CD4-positive, alpha-beta memory T cell (primary cell): ENCODE measurements at regions of chr11 and their contacts with region 1.

Region 1: DNA sequence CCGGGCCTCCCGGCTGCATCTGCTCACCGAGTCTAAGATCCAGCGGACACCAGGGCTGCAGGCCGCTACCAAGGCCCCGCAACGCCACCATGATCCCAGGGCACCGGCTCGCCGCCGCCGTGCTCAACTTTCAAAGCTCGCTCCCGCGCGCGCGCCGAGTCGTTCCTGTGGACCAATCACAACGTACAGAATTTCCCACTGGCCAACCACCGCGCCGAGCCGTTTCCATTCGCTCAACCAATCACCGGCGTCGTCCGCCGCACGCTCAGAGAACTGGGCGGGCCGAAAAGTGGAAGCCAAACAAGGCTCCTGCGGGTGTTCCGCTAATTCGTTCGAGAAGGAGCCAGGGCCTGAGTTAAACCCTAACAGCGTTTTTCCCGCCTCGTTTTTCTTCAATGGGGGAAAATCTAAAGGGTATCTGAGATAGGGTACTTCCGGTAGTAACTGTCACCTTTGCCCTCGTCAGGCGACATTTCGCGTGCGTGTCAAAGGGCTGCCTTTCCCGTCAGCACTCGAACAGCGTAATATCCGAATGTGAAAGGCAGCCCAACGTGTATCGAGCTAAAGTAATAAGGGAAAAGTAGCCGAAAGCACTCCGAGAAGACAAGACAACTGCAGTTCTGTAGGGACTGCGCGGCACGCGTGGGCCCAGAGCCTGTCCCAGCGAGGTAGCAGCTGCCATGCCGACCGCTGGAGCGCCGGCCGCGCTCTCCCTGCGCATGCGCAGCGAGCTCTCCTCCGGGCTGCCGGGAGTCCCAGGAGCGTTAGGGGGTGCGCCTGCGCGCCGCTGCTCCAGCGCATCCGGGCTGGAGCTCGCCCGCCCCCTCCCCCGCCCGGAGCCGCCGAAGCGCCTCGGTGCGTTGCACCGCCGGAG is at the starts of genes NCAPD3 and VPS26B:
- DNase-seq: peak; percentile 95 to 96 (median 95)
- H3K4me3 ChIP-seq: peak within 1 kb of the TSS; percentile 83 to 100
- H3K4me3 Mint-ChIP-seq: peak within 1 kb of the TSS; percentile 93 to 98 (median 96)
- H3K27ac ChIP-seq: peak within 1 kb of the TSS; percentile 95
- H3K27ac Mint-ChIP-seq: peak within 1 kb of the TSS; percentile 98 to 99 (median 99)
- H3K4me1 ChIP-seq: peaks cover 53% of the 10 kb centered on the region
- H3K4me1 Mint-ChIP-seq: peaks cover 42 to 69% (median 52%) of the 10 kb centered on the region in 4 donors
- H3K27me3 ChIP-seq: no peaks in the 10 kb centered on the region
- H3K27me3 Mint-ChIP-seq: no peaks in the 10 kb centered on the region
- total RNA-seq, gene NCAPD3: 39.9 to 41.8 TPM
- total RNA-seq, gene VPS26B: 72.2 to 76.6 TPM

Region 2: GRCh38 chr11:133956650-133957633 is 267.1 kb before region 1 on chr11 and contains the start of gene IGSF9B:
- CTCF ChIA-PET with region 1: no interaction called
- POLR2A ChIA-PET with region 1: interaction called, 4 read pairs
- intact Hi-C with region 1: loop called (anchors 1 kb)
- DNase-seq: peak; percentile 89 to 96 (median 92)
- H3K4me3 ChIP-seq: peak within 1 kb of the TSS; percentile 57 to 95
- H3K4me3 Mint-ChIP-seq: peak within 1 kb of the TSS; percentile 89 to 95 (median 92)
- H3K27ac ChIP-seq: peak within 1 kb of the TSS; percentile 58
- H3K27ac Mint-ChIP-seq: peak within 1 kb of the TSS; percentile 84 to 94 (median 90)
- H3K4me1 ChIP-seq: peaks cover 38% of the 10 kb centered on the region
- H3K4me1 Mint-ChIP-seq: peaks cover 24 to 48% (median 40%) of the 10 kb centered on the region in 4 donors
- H3K27me3 ChIP-seq: peaks cover 5% of the 10 kb centered on the region
- H3K27me3 Mint-ChIP-seq: peaks cover 7 to 10% of the 10 kb centered on the region in 2 donors
- total RNA-seq, gene IGSF9B: 36.0 to 38.6 TPM

Region 3: GRCh38 chr11:134235399-134235798 is 11.3 kb after region 1 on chr11:
- CTCF ChIA-PET with region 1: interaction called, 6 read pairs
- POLR2A ChIA-PET with region 1: interaction called, 17 read pairs
- intact Hi-C with region 1: no loop called
- DNase-seq: no peak
- H3K4me3 ChIP-seq: no peak overlapping the region
- H3K4me3 Mint-ChIP-seq: no peak overlapping the region
- H3K27ac ChIP-seq: no peak overlapping the region
- H3K27ac Mint-ChIP-seq: no peak overlapping the region
- H3K4me1 ChIP-seq: peaks cover 13% of the 10 kb centered on the region
- H3K4me1 Mint-ChIP-seq: peaks cover 12 to 26% (median 14%) of the 10 kb centered on the region in 4 donors
- H3K27me3 ChIP-seq: no peaks in the 10 kb centered on the region
- H3K27me3 Mint-ChIP-seq: no peaks in the 10 kb centered on the region

Region 4: GRCh38 chr11:134253188-134253993 is 29.3 kb after region 1 on chr11 and contains the starts of genes ACAD8 and THYN1:
- CTCF ChIA-PET with region 1: interaction called, 5 read pairs
- POLR2A ChIA-PET with region 1: interaction called, 92 read pairs
- intact Hi-C with region 1: loop called (anchors 1 kb)
- DNase-seq: peak; percentile 94 to 97 (median 95)
- H3K4me3 ChIP-seq: peak within 1 kb of the TSS; percentile 71 to 93
- H3K4me3 Mint-ChIP-seq: peak within 1 kb of the TSS; percentile 91 to 96 (median 94)
- H3K27ac ChIP-seq: peak within 1 kb of the TSS; percentile 62
- H3K27ac Mint-ChIP-seq: peak within 1 kb of the TSS; percentile 54 to 91 (median 89)
- H3K4me1 ChIP-seq: peaks cover 30% of the 10 kb centered on the region
- H3K4me1 Mint-ChIP-seq: peaks cover 21 to 43% (median 34%) of the 10 kb centered on the region in 4 donors
- H3K27me3 ChIP-seq: no peaks in the 10 kb centered on the region
- H3K27me3 Mint-ChIP-seq: no peaks in the 10 kb centered on the region
- total RNA-seq, gene ACAD8: 36.9 to 38.6 TPM
- total RNA-seq, gene THYN1: 59.3 to 70.8 TPM

Region 5: GRCh38 chr11:134331354-134332188 is 107.5 kb after region 1 on chr11 and contains the start of gene GLB1L2:
- CTCF ChIA-PET with region 1: no interaction called
- POLR2A ChIA-PET with region 1: interaction called, 7 read pairs
- intact Hi-C with region 1: loop called (anchors 1 kb)
- DNase-seq: peak; percentile 77 to 83 (median 80)
- H3K4me3 ChIP-seq: peak within 1 kb of the TSS in 1 of 2 donors; percentile 59
- H3K4me3 Mint-ChIP-seq: peak within 1 kb of the TSS; percentile 85 to 95 (median 91)
- H3K27ac ChIP-seq: no peak within 1 kb of the TSS
- H3K27ac Mint-ChIP-seq: peak within 1 kb of the TSS; percentile 20 to 90 (median 84)
- H3K4me1 ChIP-seq: peaks cover 14% of the 10 kb centered on the region
- H3K4me1 Mint-ChIP-seq: peaks cover 7 to 22% (median 12%) of the 10 kb centered on the region in 4 donors
- H3K27me3 ChIP-seq: no peaks in the 10 kb centered on the region
- H3K27me3 Mint-ChIP-seq: peaks cover 0 to 4% of the 10 kb centered on the region in 2 donors
- total RNA-seq, gene GLB1L2: 1.2 to 1.5 TPM